PC-3 (cell line): ENCODE measurements at regions of chr11 and their contacts with region 1.

Region 1: GRCh38 chr11:77309401-77310085 is 8.1 kb upstream of the GDPD4 start:
- DNase-seq: no peak
- ATAC-seq: no peak
- H3K4me3 ChIP-seq: no peak overlapping the region
- H3K27ac ChIP-seq: no peak overlapping the region
- H3K4me1 ChIP-seq: peaks cover 4% of the 10 kb centered on the region; the same call in 1 of the 2 replicates
- H3K27me3 ChIP-seq: no peaks in the 10 kb centered on the region
- CTCF ChIP-seq: no peak

Region 2: GRCh38 chr11:76835928-76836612 is 473.5 kb before region 1 on chr11:
- CTCF ChIA-PET with region 1: no interaction called
- POLR2A ChIA-PET with region 1: no interaction called
- intact Hi-C with region 1: no loop called
- DNase-seq: peak; percentile 94
- ATAC-seq: peak; percentile 87
- H3K4me3 ChIP-seq: no peak overlapping the region
- H3K27ac ChIP-seq: peak overlapping the region; percentile 52
- H3K4me1 ChIP-seq: peaks cover 48% of the 10 kb centered on the region
- H3K27me3 ChIP-seq: no peaks in the 10 kb centered on the region
- CTCF ChIP-seq: no peak

Region 3: GRCh38 chr11:77244243-77245027 is 65.1 kb before region 1 on chr11:
- CTCF ChIA-PET with region 1: no interaction called
- POLR2A ChIA-PET with region 1: no interaction called
- intact Hi-C with region 1: loop called (anchors 10 kb)
- DNase-seq: peak; percentile 82
- ATAC-seq: peak; percentile 81
- H3K4me3 ChIP-seq: no peak overlapping the region
- H3K27ac ChIP-seq: peak overlapping the region; percentile 94
- H3K4me1 ChIP-seq: peaks cover 31% of the 10 kb centered on the region
- H3K27me3 ChIP-seq: no peaks in the 10 kb centered on the region
- CTCF ChIP-seq: no peak